ENCODE measurements at regions of chr9 and their contacts with region 1.

Region 1: DNA sequence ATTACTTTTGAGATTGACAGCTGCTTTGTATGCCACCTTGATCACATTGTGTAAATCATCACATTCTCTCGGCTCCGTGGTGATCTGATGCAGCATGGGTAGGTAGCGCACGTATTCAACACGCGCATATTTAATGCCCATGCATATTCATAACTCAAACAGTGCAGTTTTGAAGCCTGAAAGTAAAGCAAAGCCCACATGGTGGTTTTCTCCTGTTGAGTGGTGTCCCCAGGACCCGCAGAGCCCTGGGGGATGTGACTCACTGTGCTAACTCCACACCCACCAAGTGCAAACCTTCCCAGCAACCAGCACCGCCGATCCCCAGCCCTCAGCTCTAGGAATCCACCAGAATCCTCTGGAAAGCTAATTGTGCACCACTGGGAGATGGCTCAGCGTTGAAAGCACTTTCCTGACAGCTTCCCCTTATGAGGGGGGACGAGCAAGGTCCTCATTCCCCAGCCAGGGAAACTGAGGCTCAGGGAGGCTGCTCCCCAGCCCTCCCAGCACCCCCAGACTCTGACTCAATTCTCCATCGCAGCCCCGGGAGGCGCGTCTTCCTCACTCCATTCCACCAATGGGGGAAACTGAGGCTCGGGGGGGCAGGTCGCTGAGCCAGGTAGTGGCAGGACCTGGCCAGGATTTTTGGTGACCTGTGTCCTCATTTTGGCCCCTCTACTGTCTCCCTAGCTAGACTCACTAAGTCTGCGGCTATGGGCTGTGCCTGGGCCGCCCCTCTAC is 46.4 kb downstream of the SARDH start:
- DNase-seq: no peak
- H3K4me3 ChIP-seq: no peak overlapping the region
- H3K4me3 Mint-ChIP-seq: no peak overlapping the region
- H3K27ac Mint-ChIP-seq: peak overlapping the region; percentile 69
- H3K4me1 ChIP-seq: peaks cover 35% of the 10 kb centered on the region
- H3K4me1 Mint-ChIP-seq: peaks cover 38% of the 10 kb centered on the region
- H3K27me3 ChIP-seq: no peaks in the 10 kb centered on the region
- H3K27me3 Mint-ChIP-seq: peaks cover 8% of the 10 kb centered on the region
- CTCF ChIP-seq: no peak

Region 2: GRCh38 chr9:133715866-133716563 is 24.2 kb after region 1 on chr9:
- CTCF ChIA-PET with region 1: no interaction called
- POLR2A ChIA-PET with region 1: no interaction called
- intact Hi-C with region 1: loop called (anchors 2 kb)
- DNase-seq: peak; percentile 39 to 51
- H3K4me3 ChIP-seq: no peak overlapping the region
- H3K4me3 Mint-ChIP-seq: no peak overlapping the region
- H3K27ac Mint-ChIP-seq: no peak overlapping the region
- H3K4me1 ChIP-seq: peaks cover 25% of the 10 kb centered on the region
- H3K4me1 Mint-ChIP-seq: peaks cover 7% of the 10 kb centered on the region
- H3K27me3 ChIP-seq: no peaks in the 10 kb centered on the region
- H3K27me3 Mint-ChIP-seq: peaks cover 3% of the 10 kb centered on the region
- CTCF ChIP-seq: peak; percentile 54 to 59

Region 3: GRCh38 chr9:133742849-133743444 is 51.2 kb after region 1 on chr9:
- CTCF ChIA-PET with region 1: no interaction called
- POLR2A ChIA-PET with region 1: no interaction called
- intact Hi-C with region 1: no loop called
- DNase-seq: peak; percentile 88 to 91
- H3K4me3 ChIP-seq: no peak overlapping the region
- H3K4me3 Mint-ChIP-seq: no peak overlapping the region
- H3K27ac Mint-ChIP-seq: no peak overlapping the region
- H3K4me1 ChIP-seq: peaks cover 13% of the 10 kb centered on the region
- H3K4me1 Mint-ChIP-seq: peaks cover 9% of the 10 kb centered on the region
- H3K27me3 ChIP-seq: no peaks in the 10 kb centered on the region
- H3K27me3 Mint-ChIP-seq: no peaks in the 10 kb centered on the region
- CTCF ChIP-seq: peak; percentile 95 to 98